ENCODE measurements at regions of chr9 and their contacts with region 1.

Region 1: DNA sequence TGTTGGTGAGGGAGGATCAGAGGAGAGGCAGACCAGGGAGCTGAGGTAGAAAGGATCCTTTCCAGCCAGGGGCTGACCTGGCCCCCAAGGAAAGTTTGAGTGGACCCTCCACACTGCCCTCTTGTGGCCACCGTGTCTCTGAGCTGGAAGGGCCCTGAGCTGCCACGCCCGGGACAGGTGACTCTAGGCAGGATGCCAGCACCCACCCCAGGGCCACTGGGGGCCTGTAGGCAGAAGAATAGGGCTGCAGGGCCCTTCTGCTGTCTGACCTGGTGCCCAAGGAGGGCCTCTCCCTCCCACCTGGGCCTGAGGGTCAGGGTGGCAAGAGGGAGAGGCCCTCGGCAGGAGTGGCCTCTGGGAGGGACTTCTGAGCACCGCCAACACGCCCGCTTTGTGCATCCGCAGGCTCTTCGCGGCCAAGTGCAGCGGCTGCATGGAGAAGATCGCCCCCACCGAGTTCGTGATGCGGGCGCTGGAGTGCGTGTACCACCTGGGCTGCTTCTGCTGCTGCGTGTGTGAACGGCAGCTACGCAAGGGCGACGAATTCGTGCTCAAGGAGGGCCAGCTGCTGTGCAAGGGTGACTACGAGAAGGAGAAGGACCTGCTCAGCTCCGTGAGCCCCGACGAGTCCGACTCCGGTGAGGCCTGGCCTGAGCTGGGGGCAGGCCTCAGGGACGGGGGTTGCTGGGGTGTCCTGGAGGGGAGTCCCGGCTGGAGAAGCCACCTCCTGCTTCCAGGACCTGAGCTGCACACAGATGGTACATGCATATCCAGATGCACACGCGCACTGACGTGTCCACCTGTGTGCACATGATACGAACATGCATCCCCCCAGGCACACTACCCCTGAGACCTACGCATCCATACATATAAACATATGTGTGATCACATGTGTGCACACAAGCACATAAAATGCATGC is 77.0 kb downstream of the LMX1B start:
- DNase-seq: peak; percentile 74
- ATAC-seq: peak; percentile 75

Region 2: GRCh38 chr9:126275386-126276001 is 415.2 kb before region 1 on chr9:
- intact Hi-C with region 1: no loop called
- DNase-seq: peak; percentile 44
- ATAC-seq: peak; percentile 70

Region 3: GRCh38 chr9:126611592-126612325 is 78.9 kb before region 1 on chr9:
- intact Hi-C with region 1: loop called (anchors 5 kb)
- DNase-seq: peak; percentile 88
- ATAC-seq: peak; percentile 89